HEK293 (cell line): ENCODE measurements at regions of chr1 and their contacts with region 1.

Region 1: GRCh38 chr1:28248283-28249012 is 10.9 kb upstream of the SESN2 start:
- H3K4me3 ChIP-seq: peak overlapping the region; percentile 13
- H3K27ac ChIP-seq: peak overlapping the region; percentile 44
- H3K4me1 ChIP-seq: peaks cover 12% of the 10 kb centered on the region; the same call in 1 of the 2 replicates
- CTCF ChIP-seq: peak; percentile 63

Region 2: DNA sequence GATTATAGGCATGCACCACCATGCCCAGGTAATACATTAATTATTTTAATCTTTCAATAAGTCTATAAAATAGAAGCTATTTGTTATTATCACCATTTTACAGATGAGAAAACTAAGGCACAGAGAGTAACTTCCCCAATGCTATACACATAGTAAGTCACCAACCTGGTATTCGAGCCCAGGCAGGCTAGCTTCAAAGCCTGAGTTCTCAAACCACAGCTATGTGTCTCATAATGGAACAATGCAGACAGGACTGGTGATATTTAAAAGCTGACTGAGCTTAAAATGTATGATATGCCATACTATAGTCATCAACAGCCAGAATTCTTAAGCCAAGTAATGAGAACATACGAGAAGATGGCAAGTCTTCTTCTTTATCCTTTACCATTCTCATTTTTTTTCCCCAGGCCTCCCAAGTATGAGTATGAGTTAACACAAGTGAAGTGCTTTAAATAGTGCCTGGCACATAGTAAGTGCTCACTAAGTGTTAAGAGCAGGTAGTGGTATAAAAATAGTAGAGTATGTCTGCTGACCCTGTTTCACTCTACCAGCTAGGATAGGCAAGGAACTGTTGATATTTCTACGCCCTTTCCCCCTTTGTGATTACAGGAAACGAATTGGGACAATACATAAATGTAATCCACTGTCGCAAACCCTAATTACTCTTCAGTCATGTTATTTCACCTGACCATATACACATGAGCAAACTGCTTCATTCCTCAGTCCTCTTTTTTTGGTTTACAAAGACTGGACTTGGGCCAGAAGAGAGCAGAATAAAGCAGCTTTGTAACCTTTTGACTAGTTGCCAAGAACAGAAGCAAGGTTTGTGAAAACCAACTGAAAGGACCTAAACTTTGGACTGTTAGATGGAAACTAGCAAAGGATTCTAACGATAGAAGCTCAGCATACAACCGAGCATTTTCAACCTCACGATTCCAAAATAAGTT is 169.5 kb before region 1 on chr1:
- CTCF ChIA-PET with region 1: no interaction called
- POLR2A ChIA-PET with region 1: no interaction called
- H3K4me3 ChIP-seq: no peak overlapping the region
- H3K27ac ChIP-seq: no peak overlapping the region
- H3K4me1 ChIP-seq: no peaks in the 10 kb centered on the region; the same call in 1 of the 2 replicates
- CTCF ChIP-seq: no peak

Region 3: GRCh38 chr1:28259307-28260167 is 11.1 kb after region 1 on chr1 and contains the start of gene SESN2:
- CTCF ChIA-PET with region 1: interaction called, 42 read pairs
- POLR2A ChIA-PET with region 1: interaction called, 59 read pairs
- H3K4me3 ChIP-seq: peak within 1 kb of the TSS; percentile 97
- H3K27ac ChIP-seq: peak within 1 kb of the TSS; percentile 97
- H3K4me1 ChIP-seq: no peaks in the 10 kb centered on the region; the same call in 1 of the 2 replicates
- CTCF ChIP-seq: 0 out of 2 replicates have a peak, but pooled peaks have one; percentile 13

Region 4: DNA sequence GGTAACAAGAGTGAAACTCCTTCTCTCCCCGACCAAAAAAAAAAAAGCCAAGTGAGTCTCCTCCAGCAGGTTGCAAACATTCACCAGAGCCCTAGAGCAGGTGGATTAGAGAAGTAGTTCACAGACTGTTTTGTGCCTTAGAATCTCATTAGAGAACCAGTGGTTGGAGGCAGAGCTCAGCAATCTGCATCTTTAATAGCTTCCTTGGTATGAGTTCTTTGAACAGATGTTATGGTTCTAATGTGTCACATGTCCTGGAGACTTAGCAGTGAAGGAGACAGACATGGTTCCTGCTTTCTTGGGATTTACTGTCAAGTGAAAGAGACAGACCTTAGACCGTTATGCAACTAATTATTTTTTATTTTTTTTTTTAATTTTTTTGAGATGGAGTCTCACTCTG is 37.7 kb after region 1 on chr1:
- CTCF ChIA-PET with region 1: interaction called, 16 read pairs
- POLR2A ChIA-PET with region 1: no interaction called
- H3K4me3 ChIP-seq: no peak overlapping the region
- H3K27ac ChIP-seq: no peak overlapping the region
- H3K4me1 ChIP-seq: no peaks in the 10 kb centered on the region
- CTCF ChIP-seq: no peak

Region 5: GRCh38 chr1:28354121-28354520 is 105.7 kb after region 1 on chr1:
- CTCF ChIA-PET with region 1: interaction called, 22 read pairs
- POLR2A ChIA-PET with region 1: interaction called, 3 read pairs
- H3K4me3 ChIP-seq: no peak overlapping the region
- H3K27ac ChIP-seq: no peak overlapping the region
- H3K4me1 ChIP-seq: no peaks in the 10 kb centered on the region
- CTCF ChIP-seq: no peak